ENCODE measurements at regions of chr16 and their contacts with region 1.

Region 1: DNA sequence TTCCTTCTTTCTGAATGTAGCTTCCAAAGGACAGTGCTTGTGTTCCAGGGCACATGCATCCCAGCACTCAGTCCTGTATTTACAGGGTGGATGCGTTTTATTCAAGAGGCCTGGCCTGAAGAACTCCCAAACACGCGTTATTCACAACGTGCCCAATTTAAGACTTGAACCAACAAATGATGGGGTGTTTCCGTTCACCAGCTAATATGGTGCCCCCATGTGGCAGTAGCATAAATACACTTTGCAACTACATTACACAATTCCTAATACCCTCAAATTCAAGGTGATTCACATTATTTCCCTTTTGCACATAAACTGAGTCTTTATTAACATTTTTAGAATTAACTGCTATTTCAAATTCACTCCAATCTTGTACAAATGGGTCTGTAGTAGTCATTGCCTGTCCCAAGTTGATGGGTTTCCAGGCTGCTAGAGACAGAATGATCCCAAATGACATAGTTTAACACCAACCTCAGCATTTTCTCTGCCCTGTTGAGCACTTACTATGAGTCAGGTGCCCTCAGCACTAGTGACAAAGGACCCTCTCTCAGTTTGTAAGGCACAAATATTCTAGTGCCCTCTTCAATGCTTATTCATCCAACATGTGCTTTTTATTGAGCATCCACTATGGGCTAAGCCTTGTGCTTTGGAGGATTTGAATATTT is 26.9 kb downstream of the HSD17B2 start:
- DNase-seq: no peak
- ATAC-seq: no peak
- H3K4me3 ChIP-seq: no peak overlapping the region
- H3K27ac ChIP-seq: no peak overlapping the region
- H3K4me1 ChIP-seq: no peaks in the 10 kb centered on the region
- H3K27me3 ChIP-seq: peaks cover 0 to 3% (median 0%) of the 10 kb centered on the region in 9 donors
- CTCF ChIP-seq: peak in 11 of 12 donors; percentile 11 to 48 (median 27)
- POLR2A ChIP-seq: no peak

Region 2: GRCh38 chr16:81891736-81892357 is 170.1 kb before region 1 on chr16:
- intact Hi-C with region 1: loop called in 1 of 10 experiments (anchors 5 kb)
- DNase-seq: no peak
- ATAC-seq: no peak
- H3K4me3 ChIP-seq: no peak overlapping the region
- H3K27ac ChIP-seq: no peak overlapping the region
- H3K4me1 ChIP-seq: no peaks in the 10 kb centered on the region
- H3K27me3 ChIP-seq: no peaks in the 10 kb centered on the region
- CTCF ChIP-seq: no peak
- POLR2A ChIP-seq: no peak

Region 3: GRCh38 chr16:81940781-81941560 is 121.0 kb before region 1 on chr16:
- intact Hi-C with region 1: loop called in 3 of 10 experiments (anchors 2 to 10 kb)
- DNase-seq: no peak
- ATAC-seq: peak in 1 of 4 donors; percentile 29
- H3K4me3 ChIP-seq: no peak overlapping the region
- H3K27ac ChIP-seq: no peak overlapping the region
- H3K4me1 ChIP-seq: peaks cover 0 to 5% (median 0%) of the 10 kb centered on the region in 12 donors
- H3K27me3 ChIP-seq: peaks cover 0 to 7% (median 0%) of the 10 kb centered on the region in 9 donors
- CTCF ChIP-seq: peak; percentile 31 to 60 (median 46)
- POLR2A ChIP-seq: no peak

Region 4: DNA sequence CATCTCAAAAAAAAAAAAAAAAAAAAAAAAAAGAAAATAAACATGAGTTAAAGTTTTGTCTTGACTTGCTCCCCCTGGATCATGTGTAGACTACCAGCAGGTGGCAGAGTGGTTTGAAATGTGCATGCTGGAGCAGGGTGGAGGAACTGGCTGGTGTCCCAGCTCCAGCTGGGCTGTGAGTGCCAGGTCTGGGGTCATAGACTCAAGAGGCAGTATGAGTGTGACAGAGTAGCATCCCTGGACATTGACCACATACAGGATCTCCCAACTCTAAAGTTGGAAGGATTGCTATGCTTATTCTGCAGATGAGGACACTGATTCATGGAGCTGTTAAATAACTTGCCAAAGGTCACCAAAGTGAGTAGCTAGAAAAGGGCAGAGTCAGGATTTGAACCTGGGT is 306.0 kb after region 1 on chr16:
- intact Hi-C with region 1: no loop called
- DNase-seq: peak in 4 of 5 donors; percentile 65 to 75 (median 68)
- ATAC-seq: peak; percentile 77 to 96 (median 93)
- H3K4me3 ChIP-seq: no peak overlapping the region
- H3K27ac ChIP-seq: no peak overlapping the region
- H3K4me1 ChIP-seq: no peaks in the 10 kb centered on the region
- H3K27me3 ChIP-seq: no peaks in the 10 kb centered on the region
- CTCF ChIP-seq: peak in 11 of 12 donors; percentile 12 to 52 (median 38)
- POLR2A ChIP-seq: no peak

Measured in heart left ventricle (tissue), 16 donors.